CD14-positive monocyte (primary cell): ENCODE measurements at regions of chr14 and their contacts with region 1.

Region 1: GRCh38 chr14:105605084-105605820 is 78.9 kb downstream of the TMEM121 start:
- DNase-seq: peak in 1 of 3 donors; percentile 43
- H3K4me3 ChIP-seq: no peak overlapping the region
- H3K4me3 Mint-ChIP-seq: no peak overlapping the region
- H3K27ac ChIP-seq: no peak overlapping the region
- H3K27ac Mint-ChIP-seq: no peak overlapping the region
- H3K4me1 ChIP-seq: no peaks in the 10 kb centered on the region
- H3K4me1 Mint-ChIP-seq: peaks cover 5% of the 10 kb centered on the region
- H3K27me3 ChIP-seq: no peaks in the 10 kb centered on the region
- H3K27me3 Mint-ChIP-seq: peaks cover 0 to 3% (median 0%) of the 10 kb centered on the region in 3 donors
- CTCF ChIP-seq: no peak

Region 2: DNA sequence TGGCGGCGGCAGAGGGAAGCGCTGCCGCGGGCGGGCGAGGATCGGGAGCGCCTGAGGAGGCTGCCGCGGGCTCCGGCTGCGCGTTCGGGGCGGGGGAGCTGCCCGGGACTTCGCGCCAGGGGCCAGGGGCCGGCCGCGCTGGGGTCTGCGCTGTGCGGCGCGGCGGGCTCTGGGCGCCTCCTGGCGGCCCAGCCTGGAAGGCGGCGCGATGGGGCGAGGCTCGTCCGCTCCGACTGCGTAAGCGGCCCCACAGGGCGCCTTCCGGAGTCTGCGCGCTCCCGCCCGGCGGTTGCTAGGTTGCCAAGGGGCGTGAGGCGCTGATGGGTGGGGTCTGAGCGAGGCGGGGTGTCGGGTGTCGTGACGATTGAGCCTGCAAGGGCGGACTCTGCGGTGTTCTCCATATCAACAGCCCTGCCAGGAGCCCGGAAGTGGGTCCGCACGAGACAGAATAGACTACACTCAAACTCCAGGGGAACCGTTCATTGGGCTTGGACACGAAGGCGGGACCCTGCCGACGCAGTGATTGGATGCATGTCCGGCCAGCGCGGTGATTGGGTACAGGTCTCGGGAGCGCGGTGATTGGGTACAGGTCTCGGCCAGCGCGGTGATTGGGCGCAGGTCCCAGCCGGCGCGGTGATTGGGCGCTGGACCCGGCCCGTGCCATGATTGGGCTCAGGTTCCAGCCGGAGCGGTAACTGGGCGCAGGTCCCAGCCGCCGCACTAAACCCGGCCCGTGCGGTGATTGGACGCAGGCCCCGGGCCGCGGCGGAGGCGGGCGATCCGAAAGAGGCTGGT is 114.5 kb before region 1 on chr14 and contains the start of gene TEDC1:
- intact Hi-C with region 1: no loop called
- DNase-seq: peak; percentile 100
- H3K4me3 ChIP-seq: peak within 1 kb of the TSS; percentile 58 to 89 (median 66)
- H3K4me3 Mint-ChIP-seq: peak within 1 kb of the TSS; percentile 80 to 90
- H3K27ac ChIP-seq: peak within 1 kb of the TSS; percentile 81 to 91
- H3K27ac Mint-ChIP-seq: peak within 1 kb of the TSS; percentile 90 to 97 (median 95)
- H3K4me1 ChIP-seq: peaks cover 44 to 55% of the 10 kb centered on the region in 2 donors
- H3K4me1 Mint-ChIP-seq: peaks cover 31% of the 10 kb centered on the region
- H3K27me3 ChIP-seq: peaks cover 2 to 12% of the 10 kb centered on the region in 2 donors
- H3K27me3 Mint-ChIP-seq: peaks cover 11 to 20% (median 16%) of the 10 kb centered on the region in 3 donors
- CTCF ChIP-seq: peak; percentile 84
- polyA plus RNA-seq, gene TEDC1: 7.8 to 23.4 (median 9.0) TPM

Region 3: GRCh38 chr14:105647764-105648608 is 42.7 kb after region 1 on chr14:
- intact Hi-C with region 1: loop called in 1 of 2 experiments (anchors 5 kb)
- DNase-seq: peak in 1 of 3 donors; percentile 11
- H3K4me3 ChIP-seq: no peak overlapping the region
- H3K4me3 Mint-ChIP-seq: peak overlapping the region; percentile 11 to 31
- H3K27ac ChIP-seq: no peak overlapping the region
- H3K27ac Mint-ChIP-seq: peak overlapping the region in 1 of 7 donors; percentile 54
- H3K4me1 ChIP-seq: no peaks in the 10 kb centered on the region
- H3K4me1 Mint-ChIP-seq: no peaks in the 10 kb centered on the region
- H3K27me3 ChIP-seq: no peaks in the 10 kb centered on the region
- H3K27me3 Mint-ChIP-seq: peaks cover 0 to 1% (median 0%) of the 10 kb centered on the region in 3 donors
- CTCF ChIP-seq: no peak